ENCODE measurements at regions of chr21 and their contacts with region 1.

Region 1: DNA sequence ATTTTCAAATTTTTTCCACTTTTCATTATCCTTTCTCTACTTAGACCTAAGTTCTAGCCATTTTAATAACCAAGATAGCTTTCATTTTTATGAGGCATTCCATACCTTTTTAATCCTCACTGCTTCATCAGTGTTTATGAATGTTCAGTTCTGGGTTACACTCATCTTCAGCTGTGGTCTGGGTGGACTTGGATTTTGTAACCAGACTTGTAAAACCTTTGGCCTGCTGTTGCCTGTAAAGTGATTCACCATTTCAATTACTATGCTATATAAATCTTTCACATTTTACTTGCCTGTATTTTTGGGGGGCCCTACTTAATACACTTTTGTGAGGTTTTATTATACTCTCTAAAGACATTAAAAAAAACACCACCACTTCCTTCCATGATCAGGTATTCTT is 46.2 kb downstream of the USP25 start:
- DNase-seq: no peak
- ATAC-seq: no peak
- H3K4me3 ChIP-seq: no peak overlapping the region
- H3K4me3 Mint-ChIP-seq: no peak overlapping the region
- H3K27ac ChIP-seq: no peak overlapping the region
- H3K27ac Mint-ChIP-seq: no peak overlapping the region
- H3K4me1 ChIP-seq: peaks cover 10% of the 10 kb centered on the region
- H3K4me1 Mint-ChIP-seq: peaks cover 44% of the 10 kb centered on the region
- H3K27me3 ChIP-seq: no peaks in the 10 kb centered on the region
- H3K27me3 Mint-ChIP-seq: no peaks in the 10 kb centered on the region
- CTCF ChIP-seq: no peak

Region 2: DNA sequence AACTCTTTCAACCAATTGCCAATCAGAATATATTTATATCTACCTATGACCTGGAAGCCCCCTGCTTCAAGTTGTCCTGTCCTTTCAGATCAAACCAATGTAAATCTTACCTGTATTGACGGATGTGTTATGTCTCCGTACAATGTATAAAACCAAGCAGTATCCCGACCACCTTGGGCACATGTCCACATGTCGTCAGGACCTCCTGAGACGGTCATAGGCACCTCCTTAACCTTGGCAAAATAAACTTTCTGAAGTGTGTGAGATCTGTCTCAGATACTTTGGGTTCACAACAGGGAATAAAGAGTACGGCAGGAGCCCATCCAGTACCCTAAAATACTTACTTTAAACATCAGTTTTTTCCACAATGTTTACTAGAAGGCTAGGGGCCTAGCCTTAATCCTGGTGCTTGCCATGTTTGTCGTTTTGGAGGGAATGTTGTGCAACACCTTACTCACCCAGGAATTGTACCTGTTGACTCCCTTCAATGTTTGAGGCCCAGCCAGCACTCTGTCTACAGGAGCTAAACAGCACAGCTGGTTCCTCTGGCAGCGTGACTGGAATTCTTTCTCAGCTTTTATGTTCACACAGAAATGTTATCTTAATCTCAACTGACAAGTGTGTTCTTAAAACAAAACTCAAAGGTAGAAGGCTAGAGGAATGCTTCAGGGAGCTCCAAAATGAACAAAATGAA is 137.0 kb before region 1 on chr21:
- CTCF ChIA-PET with region 1: no interaction called
- POLR2A ChIA-PET with region 1: no interaction called
- intact Hi-C with region 1: no loop called
- DNase-seq: no peak
- ATAC-seq: no peak
- H3K4me3 ChIP-seq: no peak overlapping the region
- H3K4me3 Mint-ChIP-seq: no peak overlapping the region
- H3K27ac ChIP-seq: no peak overlapping the region
- H3K27ac Mint-ChIP-seq: no peak overlapping the region
- H3K4me1 ChIP-seq: no peaks in the 10 kb centered on the region
- H3K4me1 Mint-ChIP-seq: no peaks in the 10 kb centered on the region
- H3K27me3 ChIP-seq: no peaks in the 10 kb centered on the region
- H3K27me3 Mint-ChIP-seq: no peaks in the 10 kb centered on the region
- CTCF ChIP-seq: no peak

Region 3: DNA sequence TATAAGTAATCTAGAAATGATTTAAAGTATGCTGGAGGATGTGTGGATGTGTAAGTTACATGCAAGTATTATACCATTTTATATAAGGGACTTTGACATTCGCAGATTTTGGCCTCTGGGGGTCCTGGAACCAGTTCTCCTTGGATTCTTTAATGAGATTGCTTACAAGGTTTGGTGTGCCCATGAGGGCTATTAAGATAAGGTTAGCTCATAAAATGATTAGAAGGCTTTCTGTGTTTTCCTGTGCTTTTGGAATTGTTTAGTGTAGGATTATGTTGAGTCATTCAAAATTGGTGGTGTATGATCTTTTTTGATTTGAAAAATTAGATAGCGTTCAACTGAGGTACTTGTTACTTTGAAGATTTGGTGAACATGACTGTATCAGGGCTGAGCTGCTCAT is 40.6 kb before region 1 on chr21:
- CTCF ChIA-PET with region 1: no interaction called
- POLR2A ChIA-PET with region 1: no interaction called
- intact Hi-C with region 1: loop called (anchors 2 to 5 kb)
- DNase-seq: peak in 1 of 9 experiments; percentile 17
- ATAC-seq: no peak
- H3K4me3 ChIP-seq: no peak overlapping the region
- H3K4me3 Mint-ChIP-seq: peak overlapping the region; percentile 40
- H3K27ac ChIP-seq: peak overlapping the region in 1 of 2 experiments; percentile 41
- H3K27ac Mint-ChIP-seq: peak overlapping the region; percentile 49
- H3K4me1 ChIP-seq: peaks cover 72% of the 10 kb centered on the region
- H3K4me1 Mint-ChIP-seq: peaks cover 90% of the 10 kb centered on the region
- H3K27me3 ChIP-seq: no peaks in the 10 kb centered on the region
- H3K27me3 Mint-ChIP-seq: no peaks in the 10 kb centered on the region
- CTCF ChIP-seq: no peak

Region 4: DNA sequence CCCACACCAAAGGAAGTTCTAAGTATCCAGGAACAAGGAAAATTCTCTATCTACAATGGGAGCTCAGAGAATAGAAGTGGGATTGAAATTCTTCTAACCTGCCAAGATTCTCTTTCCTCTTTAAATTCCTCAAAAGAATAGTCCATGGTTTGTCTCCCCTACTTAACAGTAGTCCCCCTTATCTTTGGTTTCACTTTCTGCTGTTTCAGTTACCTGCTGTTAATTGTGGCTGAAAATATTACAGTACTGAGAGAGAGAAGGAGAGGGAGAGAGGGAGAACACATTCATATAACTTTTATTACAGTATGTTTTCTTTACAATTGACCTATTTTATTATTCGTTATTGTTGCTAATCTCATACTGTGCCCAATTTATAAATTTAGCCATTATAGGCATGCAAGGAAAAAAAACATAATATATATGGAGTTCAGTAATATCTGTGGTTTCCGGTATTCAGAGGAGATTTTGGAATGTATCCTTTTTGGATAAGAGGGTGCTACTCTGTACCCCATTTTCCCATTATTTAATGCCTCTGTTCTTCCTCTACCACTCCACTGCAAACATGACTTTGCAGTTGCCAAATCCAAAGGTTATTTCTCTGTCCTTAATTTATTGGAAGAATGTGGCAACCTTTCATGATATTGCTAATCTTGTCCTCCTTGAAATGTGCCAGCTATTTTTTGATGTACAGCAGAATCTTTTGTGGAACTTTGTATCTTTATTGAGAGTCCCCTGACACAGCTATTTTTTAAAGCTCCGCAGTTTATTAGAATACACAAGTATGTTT is 21.8 kb after region 1 on chr21:
- CTCF ChIA-PET with region 1: no interaction called
- POLR2A ChIA-PET with region 1: no interaction called
- intact Hi-C with region 1: loop called in 1 of 2 experiments (anchors 2 kb)
- DNase-seq: peak in 1 of 9 experiments; percentile 14
- ATAC-seq: no peak
- H3K4me3 ChIP-seq: no peak overlapping the region
- H3K4me3 Mint-ChIP-seq: no peak overlapping the region
- H3K27ac ChIP-seq: no peak overlapping the region
- H3K27ac Mint-ChIP-seq: peak overlapping the region; percentile 70
- H3K4me1 ChIP-seq: peaks cover 4% of the 10 kb centered on the region
- H3K4me1 Mint-ChIP-seq: peaks cover 65% of the 10 kb centered on the region
- H3K27me3 ChIP-seq: no peaks in the 10 kb centered on the region
- H3K27me3 Mint-ChIP-seq: no peaks in the 10 kb centered on the region
- CTCF ChIP-seq: no peak

Region 5: DNA sequence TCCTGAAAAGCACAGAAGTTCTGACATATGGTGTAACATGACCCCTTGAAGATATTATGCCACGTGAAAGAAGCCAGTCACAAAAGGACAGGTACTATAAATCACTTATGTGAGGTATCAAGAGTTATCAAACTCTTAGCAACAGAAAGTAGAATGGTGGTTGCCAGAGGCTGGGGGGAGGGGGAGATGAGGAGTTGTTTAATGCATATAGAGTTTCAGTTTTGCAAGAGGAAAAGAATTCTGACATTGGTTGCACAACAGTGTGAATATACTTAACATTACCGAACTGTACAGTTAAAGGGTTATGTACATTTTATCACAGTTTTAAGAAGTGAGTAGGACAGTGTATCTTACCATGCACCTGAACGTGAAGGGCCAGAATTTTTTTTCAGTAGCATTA is 33.8 kb after region 1 on chr21:
- CTCF ChIA-PET with region 1: no interaction called
- POLR2A ChIA-PET with region 1: no interaction called
- intact Hi-C with region 1: loop called in 1 of 2 experiments (anchors 5 kb)
- DNase-seq: no peak
- ATAC-seq: no peak
- H3K4me3 ChIP-seq: no peak overlapping the region
- H3K4me3 Mint-ChIP-seq: no peak overlapping the region
- H3K27ac ChIP-seq: no peak overlapping the region
- H3K27ac Mint-ChIP-seq: no peak overlapping the region
- H3K4me1 ChIP-seq: no peaks in the 10 kb centered on the region
- H3K4me1 Mint-ChIP-seq: peaks cover 4% of the 10 kb centered on the region
- H3K27me3 ChIP-seq: no peaks in the 10 kb centered on the region
- H3K27me3 Mint-ChIP-seq: no peaks in the 10 kb centered on the region
- CTCF ChIP-seq: no peak

Region 6: GRCh38 chr21:16082038-16082816 is 306.2 kb after region 1 on chr21:
- CTCF ChIA-PET with region 1: no interaction called
- POLR2A ChIA-PET with region 1: no interaction called
- intact Hi-C with region 1: no loop called
- DNase-seq: no peak
- ATAC-seq: no peak
- H3K4me3 ChIP-seq: no peak overlapping the region
- H3K4me3 Mint-ChIP-seq: no peak overlapping the region
- H3K27ac ChIP-seq: no peak overlapping the region
- H3K27ac Mint-ChIP-seq: no peak overlapping the region
- H3K4me1 ChIP-seq: no peaks in the 10 kb centered on the region
- H3K4me1 Mint-ChIP-seq: no peaks in the 10 kb centered on the region
- H3K27me3 ChIP-seq: no peaks in the 10 kb centered on the region
- H3K27me3 Mint-ChIP-seq: no peaks in the 10 kb centered on the region
- CTCF ChIP-seq: no peak

Measured in CD8-positive, alpha-beta T cell (primary cell).